OCI-LY7 (cell line): ENCODE measurements at regions of chr14 and their contacts with region 1.

Region 1: GRCh38 chr14:45144658-45145057 is 8.9 kb downstream of the FANCM start:
- DNase-seq: no peak
- H3K4me3 ChIP-seq: no peak overlapping the region
- H3K27ac ChIP-seq: no peak overlapping the region
- H3K4me1 ChIP-seq: peaks cover 16% of the 10 kb centered on the region
- CTCF ChIP-seq: no peak

Region 2: GRCh38 chr14:45041641-45042040 is 103.0 kb before region 1 on chr14:
- CTCF ChIA-PET with region 1: no interaction called
- POLR2A ChIA-PET with region 1: no interaction called
- intact Hi-C with region 1: no loop called
- DNase-seq: no peak
- H3K4me3 ChIP-seq: no peak overlapping the region
- H3K27ac ChIP-seq: no peak overlapping the region
- H3K4me1 ChIP-seq: no peaks in the 10 kb centered on the region
- CTCF ChIP-seq: no peak

Region 3: DNA sequence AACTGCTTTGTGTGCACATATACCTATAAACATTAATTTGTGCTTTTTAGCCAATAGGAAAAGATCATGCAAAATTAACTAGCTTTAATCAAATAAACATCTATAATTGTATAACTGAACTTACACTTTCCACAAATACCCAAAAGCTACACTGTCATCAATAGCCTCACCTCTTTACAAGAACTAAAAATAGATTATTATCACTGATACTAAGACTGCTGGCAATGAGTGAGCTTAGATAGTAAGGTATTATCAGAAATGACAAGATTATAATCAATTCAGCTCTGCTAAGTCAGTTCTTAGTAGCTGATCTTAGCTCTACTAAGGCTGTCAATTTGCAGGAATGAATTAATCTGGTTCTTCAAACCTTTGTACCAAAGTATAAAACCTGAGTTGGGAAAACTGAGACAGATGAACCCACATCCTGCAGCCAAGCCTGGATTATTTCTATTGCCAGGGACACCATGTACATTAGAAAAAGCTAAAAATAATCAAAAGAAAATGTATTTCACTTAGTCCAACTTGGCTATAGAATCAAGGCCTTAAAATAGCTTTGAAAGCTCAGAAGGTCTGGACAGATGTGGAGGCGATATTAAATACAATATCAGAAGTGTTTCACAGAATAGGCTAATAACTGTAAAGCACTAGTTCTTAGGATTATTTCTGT is 15.6 kb before region 1 on chr14:
- CTCF ChIA-PET with region 1: no interaction called
- POLR2A ChIA-PET with region 1: interaction called, 22 read pairs
- intact Hi-C with region 1: no loop called
- DNase-seq: no peak
- H3K4me3 ChIP-seq: no peak overlapping the region
- H3K27ac ChIP-seq: no peak overlapping the region
- H3K4me1 ChIP-seq: peaks cover 9% of the 10 kb centered on the region
- CTCF ChIP-seq: no peak